ENCODE measurements at regions of chr21 and their contacts with region 1.

Region 1: DNA sequence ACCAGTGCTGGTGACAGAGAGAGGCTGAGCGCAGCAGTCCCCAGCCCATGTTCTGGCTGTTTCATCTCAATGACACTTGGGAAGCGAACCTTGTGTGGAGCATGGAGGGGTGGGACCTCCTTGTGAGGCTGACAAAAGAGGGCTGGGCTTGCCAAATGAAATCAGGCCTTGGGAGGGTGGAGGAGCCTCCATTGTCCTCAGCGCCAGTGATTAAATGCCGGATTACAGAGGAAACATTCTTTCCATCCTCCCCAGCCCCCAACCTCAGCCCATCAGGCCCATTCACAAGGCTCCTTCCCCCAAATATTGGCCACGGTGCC is 63.3 kb upstream of the PAXBP1 start:
- DNase-seq: no peak
- ATAC-seq: no peak
- H3K4me3 ChIP-seq: no peak overlapping the region
- H3K4me3 Mint-ChIP-seq: no peak overlapping the region
- H3K27ac ChIP-seq: no peak overlapping the region
- H3K27ac Mint-ChIP-seq: no peak overlapping the region
- H3K4me1 ChIP-seq: no peaks in the 10 kb centered on the region
- H3K4me1 Mint-ChIP-seq: no peaks in the 10 kb centered on the region
- H3K27me3 ChIP-seq: peaks cover 0 to 2% of the 10 kb centered on the region in 2 experiments
- H3K27me3 Mint-ChIP-seq: no peaks in the 10 kb centered on the region
- CTCF ChIP-seq: no peak

Region 2: DNA sequence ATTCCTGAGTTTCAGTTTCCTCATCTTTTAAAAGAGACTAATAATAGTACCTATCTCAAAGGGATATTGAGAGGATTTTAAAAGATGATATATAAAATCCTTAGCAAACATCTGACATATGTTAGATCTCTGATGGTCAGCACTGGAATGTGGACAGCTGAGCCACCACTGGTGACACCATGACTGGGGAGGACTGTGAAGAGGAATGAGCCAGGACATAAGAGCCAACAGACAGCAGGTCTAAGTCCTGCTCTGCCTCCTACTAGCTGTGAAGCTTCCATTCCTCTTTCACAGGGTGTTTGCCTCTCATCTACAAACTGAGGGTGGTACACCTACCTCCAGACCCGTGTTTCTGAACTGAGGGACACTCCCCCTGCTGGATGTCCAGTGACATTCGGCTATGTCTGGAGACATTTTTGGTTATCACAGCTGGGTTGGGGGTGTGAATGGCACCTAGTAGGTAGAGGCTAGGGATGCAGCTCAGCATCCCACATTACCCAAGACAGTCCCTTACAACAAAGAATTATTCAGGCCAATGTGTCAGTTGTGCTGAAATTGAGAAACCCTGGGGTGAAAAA is 81.7 kb after region 1 on chr21:
- CTCF ChIA-PET with region 1: no interaction called
- POLR2A ChIA-PET with region 1: no interaction called
- intact Hi-C with region 1: loop called in 1 of 2 experiments (anchors 10 kb)
- DNase-seq: peak in 2 of 9 experiments; percentile 17 to 21
- ATAC-seq: no peak
- H3K4me3 ChIP-seq: no peak overlapping the region
- H3K4me3 Mint-ChIP-seq: no peak overlapping the region
- H3K27ac ChIP-seq: no peak overlapping the region
- H3K27ac Mint-ChIP-seq: no peak overlapping the region
- H3K4me1 ChIP-seq: peaks cover 23% of the 10 kb centered on the region
- H3K4me1 Mint-ChIP-seq: peaks cover 36% of the 10 kb centered on the region
- H3K27me3 ChIP-seq: no peaks in the 10 kb centered on the region
- H3K27me3 Mint-ChIP-seq: no peaks in the 10 kb centered on the region
- CTCF ChIP-seq: no peak

Region 3: GRCh38 chr21:33355355-33355754 is 520.5 kb after region 1 on chr21:
- CTCF ChIA-PET with region 1: no interaction called
- POLR2A ChIA-PET with region 1: no interaction called
- intact Hi-C with region 1: loop called in 1 of 2 experiments (anchors 10 kb)
- DNase-seq: no peak
- ATAC-seq: no peak
- H3K4me3 ChIP-seq: no peak overlapping the region
- H3K4me3 Mint-ChIP-seq: no peak overlapping the region
- H3K27ac ChIP-seq: no peak overlapping the region
- H3K27ac Mint-ChIP-seq: no peak overlapping the region
- H3K4me1 ChIP-seq: peaks cover 7% of the 10 kb centered on the region
- H3K4me1 Mint-ChIP-seq: peaks cover 11% of the 10 kb centered on the region
- H3K27me3 ChIP-seq: no peaks in the 10 kb centered on the region
- H3K27me3 Mint-ChIP-seq: no peaks in the 10 kb centered on the region
- CTCF ChIP-seq: no peak

Region 4: DNA sequence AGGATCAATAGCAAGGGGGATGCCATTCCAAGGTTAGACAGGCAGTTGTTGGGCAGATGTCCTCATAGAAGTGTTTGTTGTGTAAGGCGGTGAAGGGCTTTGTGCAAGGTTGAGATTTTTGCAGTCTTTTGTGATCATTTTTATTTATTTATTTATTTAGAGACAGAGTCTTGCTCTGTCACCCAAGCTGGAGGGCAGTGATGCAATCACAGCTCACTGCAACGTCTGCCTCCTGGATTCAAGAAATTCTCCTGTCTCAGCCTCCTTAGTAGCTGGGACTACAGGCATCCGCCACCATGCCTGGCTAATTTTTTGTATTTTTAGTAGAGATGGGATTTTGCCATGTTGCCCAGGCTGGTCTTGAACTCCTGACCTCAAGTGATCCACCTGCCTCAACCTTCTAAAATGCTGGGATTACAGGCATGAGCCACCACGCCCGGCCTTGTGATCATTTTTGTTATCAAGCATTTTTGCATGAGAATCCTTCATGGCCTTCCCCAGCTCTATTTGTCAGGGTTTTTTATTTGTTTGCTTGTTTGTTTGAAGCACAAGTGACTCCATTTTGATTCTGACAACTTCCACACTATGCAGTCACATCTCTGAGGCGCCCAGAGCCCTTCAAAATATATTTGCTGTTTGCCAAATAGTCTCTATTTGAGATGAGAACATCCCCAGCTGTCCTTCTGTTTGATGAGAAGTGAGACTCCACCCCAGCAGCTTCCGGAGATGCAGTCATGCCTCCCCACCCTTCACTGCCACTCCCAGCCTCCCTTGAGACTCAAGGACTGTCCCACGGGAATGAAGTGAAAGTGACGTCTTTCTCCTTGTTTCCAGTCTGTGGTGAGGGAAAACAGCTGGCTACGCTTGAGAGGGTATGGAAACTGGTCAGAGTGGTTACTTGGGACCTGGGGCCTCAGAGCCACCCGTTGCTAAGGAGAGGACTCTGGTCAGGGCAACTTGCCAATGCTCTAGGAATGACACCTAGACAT is 606.9 kb after region 1 on chr21:
- CTCF ChIA-PET with region 1: interaction called, 9 read pairs
- POLR2A ChIA-PET with region 1: no interaction called
- intact Hi-C with region 1: loop called (anchors 2 to 5 kb)
- DNase-seq: peak in 1 of 9 experiments; percentile 9
- ATAC-seq: no peak
- H3K4me3 ChIP-seq: no peak overlapping the region
- H3K4me3 Mint-ChIP-seq: no peak overlapping the region
- H3K27ac ChIP-seq: no peak overlapping the region
- H3K27ac Mint-ChIP-seq: peak overlapping the region; percentile 60
- H3K4me1 ChIP-seq: no peaks in the 10 kb centered on the region
- H3K4me1 Mint-ChIP-seq: peaks cover 3% of the 10 kb centered on the region
- H3K27me3 ChIP-seq: no peaks in the 10 kb centered on the region
- H3K27me3 Mint-ChIP-seq: no peaks in the 10 kb centered on the region
- CTCF ChIP-seq: no peak

Region 5: DNA sequence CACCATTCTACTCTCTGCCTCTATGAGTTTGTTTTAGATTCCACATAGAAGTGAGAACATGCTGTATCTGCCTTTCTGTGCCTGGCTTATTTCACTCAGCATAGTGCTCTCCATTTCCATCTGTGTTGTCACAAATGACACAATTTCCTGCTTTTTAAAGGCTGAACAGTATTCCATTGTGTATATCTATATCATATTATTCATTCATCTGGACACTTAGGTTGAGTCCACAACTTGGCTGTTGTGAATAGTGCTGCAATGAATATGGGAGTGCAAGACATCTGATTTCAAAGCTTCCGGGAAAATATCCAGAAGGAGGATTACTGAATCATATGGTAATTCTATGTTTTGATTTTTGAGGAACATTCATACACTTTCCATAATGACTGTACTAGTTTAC is 773.7 kb after region 1 on chr21:
- CTCF ChIA-PET with region 1: no interaction called
- POLR2A ChIA-PET with region 1: no interaction called
- intact Hi-C with region 1: loop called (anchors 10 kb)
- DNase-seq: no peak
- ATAC-seq: no peak
- H3K4me3 ChIP-seq: no peak overlapping the region
- H3K4me3 Mint-ChIP-seq: no peak overlapping the region
- H3K27ac ChIP-seq: no peak overlapping the region
- H3K27ac Mint-ChIP-seq: no peak overlapping the region
- H3K4me1 ChIP-seq: no peaks in the 10 kb centered on the region
- H3K4me1 Mint-ChIP-seq: peaks cover 3% of the 10 kb centered on the region
- H3K27me3 ChIP-seq: no peaks in the 10 kb centered on the region
- H3K27me3 Mint-ChIP-seq: no peaks in the 10 kb centered on the region
- CTCF ChIP-seq: no peak

Measured in CD8-positive, alpha-beta T cell (primary cell).